HCT116 (cell line): ENCODE measurements at regions of chr10 and their contacts with region 1.

Region 1: DNA sequence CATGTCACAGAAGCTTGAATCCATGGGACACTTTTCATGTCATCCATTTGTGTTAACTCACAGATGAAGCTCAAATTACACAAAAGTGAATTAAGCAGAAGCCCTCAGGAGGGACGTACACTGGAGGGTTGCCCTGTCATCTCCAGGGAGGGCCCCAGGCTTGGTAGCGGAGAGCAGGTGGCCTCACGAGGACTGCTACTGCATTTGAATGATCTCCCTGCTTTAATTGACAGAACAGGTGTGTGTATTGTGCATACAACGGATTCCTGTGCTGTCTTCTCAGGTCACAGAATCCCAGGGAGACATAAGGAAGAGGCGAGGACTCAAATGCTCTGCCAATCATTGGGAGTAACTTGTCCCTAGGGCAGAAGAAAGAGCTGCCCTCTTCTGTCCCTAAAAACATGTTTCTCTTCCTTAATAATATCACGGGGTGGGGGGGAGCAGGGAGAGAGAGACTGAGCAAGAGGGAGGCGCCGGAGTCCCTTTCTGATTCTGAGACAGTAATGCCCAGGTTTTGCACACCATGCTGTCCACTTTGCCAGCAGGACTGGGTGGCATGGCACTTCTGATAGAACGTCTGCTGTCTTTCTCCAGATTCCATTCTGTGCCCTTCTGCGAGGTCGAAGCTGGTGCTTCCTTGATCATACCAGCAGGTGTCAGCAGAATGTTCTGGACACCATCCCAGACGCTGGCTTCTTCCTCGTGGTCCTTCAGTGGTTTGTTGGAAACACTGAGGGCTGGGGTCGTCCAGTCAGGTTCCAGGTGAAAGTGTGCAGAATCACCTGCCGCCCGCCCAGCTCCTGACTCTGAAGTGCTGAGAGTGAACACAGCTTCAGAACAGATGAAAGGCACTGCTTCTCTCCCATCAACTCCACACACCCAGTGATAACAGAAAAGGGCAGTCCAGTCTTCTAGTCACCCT is 26.2 kb upstream of the RASGEF1A start:
- DNase-seq: peak; percentile 35
- ATAC-seq: peak; percentile 95
- H3K4me3 ChIP-seq: peak overlapping the region in 1 of 2 experiments; percentile 7; a peak in 1 of 4 replicates
- H3K27ac ChIP-seq: no peak overlapping the region
- H3K4me1 ChIP-seq: peaks cover 2 to 16% of the 10 kb centered on the region in 2 experiments
- H3K27me3 ChIP-seq: no peaks in the 10 kb centered on the region
- CTCF ChIP-seq: peak; percentile 77 to 92 (median 81)
- POLR2A ChIP-seq: no peak
- RAD21 ChIP-seq: peak; percentile 90

Region 2: DNA sequence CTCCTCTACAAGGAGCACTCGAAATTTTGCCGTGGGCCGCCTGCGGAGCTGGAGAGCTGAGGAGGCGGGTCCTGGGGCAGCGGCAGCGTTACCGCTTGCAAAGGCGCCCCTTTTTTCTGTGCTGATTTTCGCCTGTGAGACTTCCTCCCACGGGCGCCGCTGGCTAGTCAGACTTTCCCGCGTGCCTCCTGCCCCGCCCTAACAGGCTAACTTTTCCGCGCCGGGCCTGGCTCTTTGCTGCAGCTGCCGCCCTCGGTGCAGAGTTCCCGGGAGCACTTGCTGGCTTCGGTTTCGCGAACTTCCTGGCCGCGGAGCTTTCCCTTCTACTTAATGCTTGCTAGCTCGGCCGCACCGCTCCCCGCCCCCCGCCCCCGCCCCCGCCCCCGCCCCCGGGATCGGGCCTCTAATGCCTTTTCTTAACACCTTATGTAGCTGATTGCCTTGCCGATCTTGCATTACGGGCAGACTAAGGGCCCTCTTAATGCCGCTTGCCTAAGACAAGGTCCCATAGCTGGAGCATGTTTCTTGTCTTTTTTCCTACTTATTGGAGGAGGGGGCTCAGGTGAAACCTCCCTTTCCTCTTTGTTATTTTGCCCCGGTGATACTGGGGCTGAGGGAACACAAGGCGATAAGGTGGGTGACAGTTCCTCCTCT is 11.8 kb after region 1 on chr10:
- CTCF ChIA-PET with region 1: interaction called, 27 read pairs
- POLR2A ChIA-PET with region 1: interaction called, 6 read pairs
- RAD21 ChIA-PET with region 1: no interaction called
- intact Hi-C with region 1: no loop called
- DNase-seq: no peak
- ATAC-seq: peak; percentile 73
- H3K4me3 ChIP-seq: peak overlapping the region; percentile 51 to 58
- H3K27ac ChIP-seq: 0 out of 2 replicates have a peak overlapping the region, but pooled peaks have one; percentile 2
- H3K4me1 ChIP-seq: peaks cover 8 to 24% of the 10 kb centered on the region in 2 experiments
- H3K27me3 ChIP-seq: peaks cover 9% of the 10 kb centered on the region; the same call in 1 of the 2 replicates
- CTCF ChIP-seq: no peak
- POLR2A ChIP-seq: no peak
- RAD21 ChIP-seq: 0 out of 2 replicates have a peak, but pooled peaks have one; percentile 7

Region 3: GRCh38 chr10:43348511-43349312 is 55.7 kb after region 1 on chr10:
- CTCF ChIA-PET with region 1: interaction called, 18 read pairs
- POLR2A ChIA-PET with region 1: no interaction called
- RAD21 ChIA-PET with region 1: interaction called, 3 to 5 read pairs
- intact Hi-C with region 1: loop called (anchors 1 kb)
- DNase-seq: peak; percentile 52
- ATAC-seq: peak; percentile 98
- H3K4me3 ChIP-seq: no peak overlapping the region
- H3K27ac ChIP-seq: no peak overlapping the region
- H3K4me1 ChIP-seq: peaks cover 6 to 26% of the 10 kb centered on the region in 2 experiments
- H3K27me3 ChIP-seq: no peaks in the 10 kb centered on the region
- CTCF ChIP-seq: peak; percentile 97 to 99 (median 98)
- POLR2A ChIP-seq: no peak
- RAD21 ChIP-seq: peak; percentile 97

Region 4: GRCh38 chr10:43648398-43649184 is 355.6 kb after region 1 on chr10 and contains the start of gene ZNF32:
- CTCF ChIA-PET with region 1: no interaction called
- POLR2A ChIA-PET with region 1: no interaction called
- RAD21 ChIA-PET with region 1: no interaction called
- intact Hi-C with region 1: no loop called
- DNase-seq: peak; percentile 55
- ATAC-seq: peak; percentile 98
- H3K4me3 ChIP-seq: peak within 1 kb of the TSS; percentile 47 to 59
- H3K27ac ChIP-seq: peak within 1 kb of the TSS; percentile 36; the same call in 1 of the 2 replicates
- H3K4me1 ChIP-seq: peaks cover 0 to 5% of the 10 kb centered on the region in 2 experiments; a peak in 1 of 4 replicates
- H3K27me3 ChIP-seq: no peaks in the 10 kb centered on the region
- CTCF ChIP-seq: no peak
- POLR2A ChIP-seq: no peak
- RAD21 ChIP-seq: no peak
- total RNA-seq, gene ZNF32: 10.3 TPM